Right ventricle myocardium superior (tissue), 1 donor: ENCODE measurements at regions of chr9 and their contacts with region 1.

Region 1: GRCh38 chr9:34603610-34604231 is 8.2 kb downstream of the RPP25L start:
- DNase-seq: peak; percentile 89
- ATAC-seq: peak; percentile 93

Region 2: DNA sequence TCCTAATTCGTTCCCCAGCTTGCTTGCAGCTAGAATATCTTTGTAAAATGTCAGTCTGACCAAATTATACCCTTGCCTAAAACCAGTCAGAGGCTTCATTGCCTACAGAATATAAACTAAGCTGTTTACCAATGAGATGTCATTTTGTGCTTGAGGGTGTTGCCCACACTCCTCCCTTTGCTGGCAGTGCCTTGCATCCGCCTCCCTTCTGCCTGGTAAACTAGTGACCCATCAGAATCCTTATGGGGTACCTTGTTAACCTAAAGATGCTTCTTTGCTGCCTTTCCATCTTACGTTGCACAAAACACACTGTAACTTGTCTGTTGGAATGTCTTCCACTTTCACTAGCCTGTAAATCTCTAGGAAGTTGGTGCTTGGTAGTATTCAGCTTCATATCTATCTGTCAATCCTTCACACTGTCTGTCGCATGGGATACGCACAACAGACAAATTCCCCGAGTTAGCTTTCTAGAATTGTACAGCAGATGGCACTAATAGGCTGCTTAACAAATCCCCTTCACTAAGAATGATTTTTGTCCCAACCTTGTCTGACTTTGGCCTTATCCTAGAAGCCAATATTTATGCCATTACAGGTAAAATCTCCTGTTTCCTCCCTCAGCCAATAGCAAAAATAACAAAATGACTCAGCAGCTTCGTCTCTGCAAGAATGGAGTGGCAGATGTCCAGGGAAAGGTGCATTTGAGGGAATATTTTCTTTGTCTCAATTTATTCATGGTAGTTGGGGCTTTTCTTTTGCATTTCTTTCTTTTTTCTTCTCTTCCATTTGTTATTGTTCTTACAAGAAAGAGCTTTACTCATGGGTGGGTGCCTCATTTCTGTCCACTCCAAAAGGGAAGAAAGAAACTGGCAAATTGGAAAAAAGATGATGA is 271.4 kb before region 1 on chr9:
- intact Hi-C with region 1: loop called (anchors 10 kb)
- DNase-seq: no peak
- ATAC-seq: no peak

Region 3: GRCh38 chr9:34759432-34760134 is 155.9 kb after region 1 on chr9:
- intact Hi-C with region 1: no loop called
- DNase-seq: no peak
- ATAC-seq: peak; percentile 73